HEK293T (cell line): ENCODE measurements at regions of chr14 and their contacts with region 1.

Region 1: DNA sequence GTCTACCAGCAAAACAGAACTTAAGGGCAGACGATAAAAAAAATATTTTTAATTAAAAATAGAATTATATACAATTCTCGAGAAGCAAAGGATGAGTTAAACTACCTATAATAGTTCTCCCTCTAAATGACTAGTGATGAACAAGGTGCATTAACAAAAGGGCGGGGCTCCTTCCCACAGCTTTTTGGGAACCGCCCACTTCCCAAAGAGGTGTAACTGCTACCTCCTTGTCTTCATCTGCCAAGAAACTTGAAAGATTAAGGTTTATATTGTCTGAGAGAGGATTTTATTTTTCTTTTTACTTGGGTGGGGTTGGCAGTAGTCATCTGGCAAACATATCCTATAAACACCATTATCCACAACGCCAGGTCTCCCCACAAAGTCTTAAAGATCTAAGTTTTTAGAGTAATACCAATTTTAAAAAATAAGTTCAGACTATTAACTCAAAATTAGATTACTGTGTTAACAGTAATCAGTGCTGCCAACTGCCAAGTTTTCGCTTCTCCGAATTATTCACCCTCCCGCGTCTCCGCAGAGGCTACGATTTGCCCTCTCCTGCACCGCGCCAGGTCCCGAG is 931 bp downstream of the RALGAPA1 start:
- DNase-seq: peak; percentile 12

Region 2: DNA sequence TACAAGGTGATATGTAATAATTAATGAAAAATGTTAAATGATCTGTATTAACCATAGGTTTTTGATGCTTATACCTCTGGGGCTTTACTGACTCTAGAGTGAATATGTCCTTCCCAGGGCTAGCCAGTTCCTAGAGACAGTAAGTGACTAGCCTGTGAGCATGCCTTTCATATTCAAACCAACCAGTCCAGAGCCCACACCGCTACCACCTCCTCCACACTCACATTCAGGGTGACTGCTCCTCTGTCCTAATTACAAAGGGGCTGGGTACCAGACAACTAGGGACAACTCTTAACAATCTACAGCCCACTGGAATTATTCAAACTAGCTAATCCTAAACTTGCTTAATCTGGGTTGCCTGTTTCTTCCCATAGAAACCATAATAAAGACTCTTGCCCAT is 48.0 kb before region 1 on chr14:
- CTCF ChIA-PET with region 1: no interaction called
- POLR2A ChIA-PET with region 1: no interaction called
- DNase-seq: no peak

Region 3: DNA sequence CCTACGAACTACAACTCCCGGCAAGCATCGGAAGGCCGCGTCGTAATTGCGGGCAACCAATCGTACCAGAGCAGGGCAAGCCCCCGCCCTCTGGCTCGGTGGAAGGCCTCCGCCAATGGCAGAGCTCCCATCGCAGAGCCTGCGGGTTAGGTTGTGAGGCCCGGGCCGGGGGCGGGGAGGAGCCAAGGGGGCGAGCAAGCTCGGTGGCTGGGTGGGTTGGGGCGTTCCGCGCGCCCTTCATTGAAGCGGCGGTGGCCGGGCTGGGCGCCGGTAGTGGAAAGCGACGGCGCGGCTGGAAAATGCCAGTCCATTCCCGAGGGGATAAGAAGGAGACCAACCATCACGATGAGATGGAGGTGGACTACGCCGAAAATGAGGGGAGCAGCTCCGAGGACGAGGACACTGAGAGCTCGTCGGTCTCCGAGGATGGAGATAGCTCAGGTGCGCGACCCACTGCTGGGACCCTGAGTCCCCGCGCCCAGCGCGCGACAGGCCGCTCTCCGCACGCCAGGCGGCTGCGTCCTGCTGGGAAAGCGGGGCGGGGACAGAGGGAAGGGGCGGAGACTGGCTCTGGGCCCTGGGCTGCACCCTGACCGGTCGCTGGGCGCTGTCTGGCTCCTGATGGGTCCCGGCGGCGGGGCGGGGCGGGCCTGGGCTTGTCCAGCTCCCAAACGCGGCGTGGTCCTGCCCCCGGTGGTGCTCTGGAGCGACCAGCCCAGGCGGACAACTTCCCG is 18.2 kb after region 1 on chr14 and contains the start of gene BRMS1L:
- CTCF ChIA-PET with region 1: interaction called, 6 read pairs
- POLR2A ChIA-PET with region 1: interaction called, 22 read pairs
- DNase-seq: peak; percentile 94